ENCODE measurements at regions of chr1 and their contacts with region 1.

Region 1: GRCh38 chr1:37859507-37860345 is at the start of gene MTF1:
- DNase-seq: peak; percentile 97 to 98
- ATAC-seq: peak; percentile 99 to 100 (median 99)
- H3K4me3 ChIP-seq: peak within 1 kb of the TSS; percentile 72 to 97 (median 86)
- H3K27ac ChIP-seq: peak within 1 kb of the TSS; percentile 75 to 98 (median 94)
- H3K4me1 ChIP-seq: peaks cover 0 to 51% (median 42%) of the 10 kb centered on the region in 9 donors
- H3K27me3 ChIP-seq: no peaks in the 10 kb centered on the region
- CTCF ChIP-seq: peak; percentile 89 to 96 (median 93)
- total RNA-seq, gene MTF1: 10.0 to 17.1 (median 11.0) TPM

Region 2: DNA sequence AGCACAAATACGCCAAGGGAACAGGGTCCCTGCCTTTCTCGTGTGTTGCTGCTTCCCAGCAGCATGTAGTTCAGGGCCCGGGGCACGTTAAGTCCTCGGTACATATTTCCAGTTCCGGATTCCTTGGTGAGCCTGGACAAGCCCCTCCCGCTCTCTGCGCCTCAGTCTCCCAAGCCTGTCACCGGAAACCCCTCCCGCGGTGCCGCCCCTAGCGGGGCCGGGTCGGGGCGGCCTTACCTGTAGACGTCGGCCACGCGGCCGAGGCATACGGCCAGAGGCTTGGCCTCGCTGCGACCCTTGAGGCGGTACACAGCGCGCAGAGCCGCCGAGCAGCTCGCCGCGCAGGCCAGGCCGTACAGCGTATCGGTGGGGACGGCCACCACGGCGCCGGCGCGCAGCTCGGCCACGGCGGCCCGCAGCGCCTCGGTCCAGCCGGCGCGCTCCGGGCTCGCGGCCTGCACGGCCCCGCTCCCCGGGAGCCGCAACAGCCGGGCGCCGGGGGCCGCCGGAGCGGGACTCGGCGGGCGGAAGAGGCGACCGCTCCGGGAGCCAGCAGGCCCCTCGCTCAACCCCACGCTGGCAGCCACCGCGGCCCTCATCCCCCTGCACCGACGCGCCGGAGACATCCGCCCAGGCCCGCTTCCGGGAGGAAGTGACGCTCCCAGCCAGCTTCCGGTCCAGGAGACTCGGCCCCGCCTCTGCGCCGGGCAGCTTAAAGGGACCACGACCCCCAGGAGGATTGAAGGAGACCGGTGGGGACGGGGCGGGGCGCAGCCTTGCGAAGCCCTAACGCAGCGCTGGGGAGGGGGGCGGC is 52.0 kb before region 1 on chr1 and contains the starts of genes C1orf122 and YRDC:
- intact Hi-C with region 1: loop called in 7 of 10 experiments (anchors 2 to 10 kb)
- DNase-seq: peak; percentile 95 to 96
- ATAC-seq: peak; percentile 95 to 98 (median 96)
- H3K4me3 ChIP-seq: peak within 1 kb of the TSS; percentile 79 to 98 (median 87)
- H3K27ac ChIP-seq: peak within 1 kb of the TSS; percentile 76 to 99 (median 96)
- H3K4me1 ChIP-seq: peaks cover 7 to 45% (median 21%) of the 10 kb centered on the region in 9 donors
- H3K27me3 ChIP-seq: no peaks in the 10 kb centered on the region
- CTCF ChIP-seq: no peak
- total RNA-seq, gene C1orf122: 37.8 to 53.0 (median 46.0) TPM
- total RNA-seq, gene YRDC: 3.3 to 9.1 (median 5.5) TPM

Region 3: GRCh38 chr1:37901191-37901892 is 41.6 kb after region 1 on chr1:
- intact Hi-C with region 1: no loop called
- DNase-seq: no peak
- ATAC-seq: no peak
- H3K4me3 ChIP-seq: no peak overlapping the region
- H3K27ac ChIP-seq: peak overlapping the region in 1 of 10 donors; percentile 67
- H3K4me1 ChIP-seq: peaks cover 0 to 16% (median 0%) of the 10 kb centered on the region in 9 donors
- H3K27me3 ChIP-seq: no peaks in the 10 kb centered on the region
- CTCF ChIP-seq: no peak